ENCODE measurements at regions of chr20 and their contacts with region 1.

Region 1: DNA sequence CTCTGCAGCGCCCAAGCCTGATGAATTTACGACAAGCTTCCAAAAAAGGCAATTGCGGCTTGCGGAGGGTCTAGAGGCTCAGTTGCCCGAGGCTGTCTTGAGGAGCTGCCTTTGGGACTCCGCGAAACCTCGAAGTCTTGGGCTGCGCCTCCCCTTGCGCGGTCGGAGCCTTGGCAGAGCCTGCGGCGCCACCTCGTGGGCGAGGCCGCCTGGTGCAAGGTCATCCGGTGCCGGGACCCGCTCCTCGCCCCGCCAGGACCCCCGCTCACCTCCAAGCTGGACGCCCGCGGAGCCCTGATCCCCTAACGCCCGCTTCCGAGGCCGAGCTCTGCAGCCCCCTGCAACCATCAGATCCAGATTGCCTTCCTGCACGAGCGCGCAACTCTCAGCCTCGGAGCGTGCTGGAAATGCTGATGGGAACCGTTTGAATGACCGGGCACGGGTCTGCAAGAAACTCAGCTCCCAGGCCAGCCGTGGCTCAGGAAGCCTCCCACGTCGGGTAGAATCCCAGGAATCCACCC is 14.9 kb upstream of the FAM210B start:
- DNase-seq: no peak

Region 2: DNA sequence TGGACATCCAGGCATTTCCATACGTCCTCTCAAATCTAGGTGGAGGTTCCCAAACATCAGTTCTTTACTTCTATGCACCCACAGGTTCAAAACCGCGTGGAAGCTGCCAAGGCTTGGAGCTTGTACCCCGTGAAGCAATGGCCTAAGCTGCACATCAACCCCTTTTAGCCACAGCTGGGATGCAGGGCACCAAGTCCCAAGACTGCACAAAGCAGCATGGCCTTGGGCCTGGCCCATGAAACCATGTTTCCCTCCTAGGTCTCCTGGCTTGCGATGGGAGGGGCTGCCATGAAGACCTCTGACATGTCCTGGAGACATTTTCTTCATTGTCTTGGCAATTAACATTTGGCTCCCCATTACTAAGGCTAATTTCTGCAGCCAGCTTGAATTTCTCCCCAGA is 249.7 kb before region 1 on chr20:
- intact Hi-C with region 1: no loop called
- DNase-seq: no peak

Region 3: GRCh38 chr20:56202493-56203077 is 141.3 kb before region 1 on chr20:
- intact Hi-C with region 1: loop called (anchors 5 kb)
- DNase-seq: no peak

Region 4: DNA sequence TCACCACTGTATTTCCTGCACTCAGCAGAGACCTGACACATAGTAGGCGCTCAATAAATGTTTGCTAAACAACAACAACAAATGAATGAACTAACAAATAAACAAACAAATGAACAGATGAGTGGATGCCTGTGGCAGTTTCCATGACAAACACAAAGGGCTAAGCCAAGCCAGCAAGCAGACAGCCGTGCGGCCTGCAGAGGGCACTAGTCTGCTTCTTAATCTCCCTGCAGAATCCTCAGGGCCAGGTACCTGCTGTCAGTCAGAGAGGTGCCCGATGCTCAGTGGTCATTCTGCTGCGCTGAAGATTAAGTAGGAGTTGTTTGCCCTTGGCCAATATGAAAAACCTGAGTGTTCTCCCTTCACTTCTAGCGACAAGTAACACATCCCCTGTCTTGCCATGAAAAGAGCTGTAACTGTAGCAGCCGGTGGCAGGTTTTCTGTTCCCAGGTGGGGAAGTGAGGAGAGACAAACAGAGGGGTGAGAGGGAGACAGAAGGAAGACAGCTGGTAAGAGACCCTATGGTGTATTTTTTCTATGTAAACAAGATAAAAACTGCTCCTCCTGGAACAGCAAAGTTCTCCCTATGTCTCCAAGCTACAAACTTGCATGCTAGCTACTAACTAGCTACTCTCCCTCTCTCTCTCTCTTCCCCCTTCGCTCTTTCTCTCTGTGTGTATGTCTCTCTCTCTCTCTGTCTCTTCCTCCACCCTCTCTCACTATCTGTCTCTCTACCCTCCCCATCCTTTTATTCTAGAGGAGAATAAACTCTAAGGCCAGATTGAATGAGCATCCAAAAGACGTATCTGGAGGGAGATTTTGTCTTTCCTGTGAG is 95.8 kb before region 1 on chr20 and contains the start of gene MC3R:
- intact Hi-C with region 1: loop called (anchors 5 kb)
- DNase-seq: no peak
- total RNA-seq, gene MC3R: not detected